Ascending aorta (tissue), 2 donors: ENCODE measurements at regions of chr2 and their contacts with region 1.

Region 1: GRCh38 chr2:27428213-27428977 is at the start of gene NRBP1:
- DNase-seq: peak; percentile 58 to 93
- H3K4me3 ChIP-seq: peak within 1 kb of the TSS; percentile 93 to 98
- H3K27ac ChIP-seq: peak within 1 kb of the TSS; percentile 95 to 99
- H3K4me1 ChIP-seq: peaks cover 16 to 22% of the 10 kb centered on the region in 2 donors
- H3K27me3 ChIP-seq: no peaks in the 10 kb centered on the region
- CTCF ChIP-seq: no peak
- total RNA-seq, gene NRBP1: 42.1 TPM

Region 2: GRCh38 chr2:27211829-27212627 is 216.4 kb before region 1 on chr2 and contains the starts of genes ATRAID and SLC5A6:
- intact Hi-C with region 1: no loop called
- DNase-seq: peak; percentile 35 to 93
- H3K4me3 ChIP-seq: peak within 1 kb of the TSS; percentile 72 to 77
- H3K27ac ChIP-seq: peak within 1 kb of the TSS; percentile 94 to 98
- H3K4me1 ChIP-seq: peaks cover 11 to 19% of the 10 kb centered on the region in 2 donors
- H3K27me3 ChIP-seq: no peaks in the 10 kb centered on the region
- CTCF ChIP-seq: no peak
- total RNA-seq, gene ATRAID: 284 TPM
- total RNA-seq, gene SLC5A6: 85.7 TPM

Region 3: DNA sequence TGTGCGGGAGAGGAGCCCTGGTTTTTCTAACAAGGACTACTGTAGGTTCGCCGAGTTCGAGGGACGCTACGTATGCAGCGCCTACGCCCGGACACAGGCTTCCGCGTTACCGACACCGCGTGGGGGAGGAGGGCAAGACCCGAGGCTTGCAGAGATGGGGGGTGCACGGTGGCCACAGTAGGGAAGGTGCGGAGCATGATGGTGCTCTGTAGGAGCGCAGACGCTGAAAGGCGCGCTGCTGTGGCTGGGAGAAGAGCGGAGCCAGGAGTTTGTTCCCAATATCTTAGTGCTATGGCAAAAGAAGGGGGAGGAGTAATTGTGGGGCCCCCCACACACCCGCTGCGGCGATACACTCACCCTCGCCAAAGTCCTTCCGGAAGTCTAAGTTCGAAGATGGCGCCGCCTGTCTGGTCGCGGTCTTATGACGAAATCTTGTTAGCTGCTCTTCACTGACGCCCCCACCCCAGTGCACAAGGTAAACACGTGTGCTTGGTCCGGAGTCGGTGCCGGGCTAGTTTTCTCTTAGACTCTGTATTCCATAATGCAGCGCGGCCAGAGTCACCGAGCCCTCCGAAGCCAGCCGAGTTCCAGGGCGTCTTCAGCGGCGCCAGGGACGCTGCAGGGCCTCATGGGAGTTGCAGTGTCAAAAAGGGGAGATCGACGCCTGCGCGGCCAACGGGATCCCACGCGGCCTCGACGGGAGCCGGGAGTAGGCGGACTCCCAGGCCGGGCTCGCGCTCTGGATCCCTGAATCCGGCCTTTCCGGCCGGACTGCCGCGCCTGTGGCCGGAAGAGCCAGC is 71.8 kb before region 1 on chr2 and contains the start of gene GTF3C2:
- intact Hi-C with region 1: loop called (anchors 1 kb)
- DNase-seq: peak; percentile 74 to 97
- H3K4me3 ChIP-seq: peak within 1 kb of the TSS; percentile 78 to 89
- H3K27ac ChIP-seq: peak within 1 kb of the TSS; percentile 75 to 89
- H3K4me1 ChIP-seq: peaks cover 8 to 23% of the 10 kb centered on the region in 2 donors
- H3K27me3 ChIP-seq: no peaks in the 10 kb centered on the region
- CTCF ChIP-seq: peak in 1 of 3 experiments; percentile 11
- total RNA-seq, gene GTF3C2: 76.2 TPM

Region 4: DNA sequence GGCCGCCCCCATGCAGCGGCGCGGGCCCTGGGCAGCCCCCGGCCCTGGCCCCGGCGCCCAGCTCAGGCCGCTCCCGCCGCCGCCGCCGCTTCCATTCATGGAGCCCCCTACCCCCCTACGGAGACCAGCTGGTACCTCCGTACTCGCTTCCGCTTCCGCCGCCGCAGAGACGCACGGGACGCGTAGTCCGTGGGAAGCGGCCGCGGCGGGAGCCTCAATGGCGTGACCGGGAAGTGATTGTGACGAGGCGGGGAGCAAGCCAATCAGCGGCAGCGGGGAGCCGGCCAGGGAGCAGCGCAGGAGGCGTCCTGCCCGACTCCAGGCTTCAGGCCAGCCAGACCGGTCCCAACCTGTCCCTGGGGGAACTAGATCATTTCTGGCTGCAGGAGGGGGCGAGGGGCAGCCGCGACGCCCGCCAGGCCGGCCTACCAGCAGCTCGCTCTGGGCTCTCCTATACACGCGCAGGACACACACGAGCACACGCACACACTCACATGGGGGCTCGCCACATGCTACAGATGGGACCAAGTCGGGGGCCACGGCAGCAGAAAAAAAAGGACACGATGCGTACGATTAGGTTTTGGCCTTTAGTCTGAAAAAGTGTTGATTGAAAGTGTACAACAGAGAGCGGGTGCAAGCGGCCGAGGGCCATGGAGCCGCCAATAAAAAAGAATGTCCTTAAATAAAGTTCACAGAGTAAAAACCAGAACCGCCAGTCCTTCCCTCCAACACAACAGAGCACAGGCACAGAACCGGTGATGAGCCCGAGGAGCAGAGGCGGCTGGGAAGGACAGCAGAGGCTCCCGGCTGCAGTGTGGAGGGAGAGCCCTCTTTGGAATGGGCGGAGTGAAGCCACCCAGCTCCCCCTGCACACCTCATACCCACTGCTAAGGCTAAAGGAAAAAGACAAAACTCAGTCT is 47.5 kb before region 1 on chr2 and contains the start of gene ZNF513:
- intact Hi-C with region 1: loop called (anchors 2 kb)
- DNase-seq: peak; percentile 79 to 98
- H3K4me3 ChIP-seq: peak within 1 kb of the TSS; percentile 89 to 96
- H3K27ac ChIP-seq: peak within 1 kb of the TSS; percentile 89 to 90
- H3K4me1 ChIP-seq: peaks cover 0 to 16% of the 10 kb centered on the region in 2 donors
- H3K27me3 ChIP-seq: no peaks in the 10 kb centered on the region
- CTCF ChIP-seq: no peak
- total RNA-seq, gene ZNF513: 17.7 TPM

Region 5: GRCh38 chr2:27489498-27490397 is 61.4 kb after region 1 on chr2 and contains the start of gene IFT172:
- intact Hi-C with region 1: loop called (anchors 2 kb)
- DNase-seq: peak; percentile 97 to 99
- H3K4me3 ChIP-seq: peak within 1 kb of the TSS; percentile 54 to 73
- H3K27ac ChIP-seq: peak within 1 kb of the TSS; percentile 69 to 77
- H3K4me1 ChIP-seq: peaks cover 0 to 14% of the 10 kb centered on the region in 2 donors
- H3K27me3 ChIP-seq: no peaks in the 10 kb centered on the region
- CTCF ChIP-seq: no peak
- total RNA-seq, gene IFT172: 204 TPM